GM12878 (cell line): ENCODE measurements at regions of chr1 and their contacts with region 1.

Region 1: GRCh38 chr1:165367375-165367993 is 11.0 kb upstream of the LMX1A start:
- DNase-seq: peak; percentile 3
- ATAC-seq: peak; percentile 91
- H3K4me3 ChIP-seq: no peak overlapping the region
- H3K27ac ChIP-seq: no peak overlapping the region
- H3K4me1 ChIP-seq: no peaks in the 10 kb centered on the region
- H3K27me3 ChIP-seq: no peaks in the 10 kb centered on the region; a peak in 1 of 4 replicates
- CTCF ChIP-seq: peak; percentile 79 to 97 (median 96)
- EP300 ChIP-seq: no peak
- POLR2A ChIP-seq: no peak
- RAD21 ChIP-seq: peak; percentile 53

Region 2: DNA sequence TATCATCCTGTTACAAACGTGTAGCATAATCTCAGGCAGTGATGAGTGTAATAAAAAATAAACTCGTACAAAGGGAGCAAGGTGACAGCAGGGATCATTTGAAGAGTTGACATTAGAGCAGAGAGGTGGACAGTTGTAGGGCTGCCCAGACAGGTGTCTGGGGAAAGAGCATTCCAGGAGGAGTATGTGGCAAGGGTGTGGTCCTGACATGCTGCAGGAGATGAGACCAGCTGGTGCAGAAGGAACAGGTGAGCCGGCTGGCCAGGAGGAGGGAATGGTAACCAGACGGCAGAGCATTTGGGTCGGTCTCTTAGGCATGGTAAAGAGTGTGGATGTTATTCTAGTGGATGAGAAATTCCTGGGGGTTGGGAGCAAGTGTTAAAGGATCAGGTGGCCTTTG is 317.2 kb before region 1 on chr1:
- CTCF ChIA-PET with region 1: no interaction called
- POLR2A ChIA-PET with region 1: no interaction called
- RAD21 ChIA-PET with region 1: no interaction called
- SMC1A ChIA-PET with region 1: no interaction called
- in situ Hi-C with region 1: no loop called
- intact Hi-C with region 1: no loop called
- DNase-seq: no peak
- ATAC-seq: no peak
- H3K4me3 ChIP-seq: no peak overlapping the region
- H3K27ac ChIP-seq: no peak overlapping the region
- H3K4me1 ChIP-seq: no peaks in the 10 kb centered on the region
- H3K27me3 ChIP-seq: no peaks in the 10 kb centered on the region; a peak in 1 of 4 replicates
- CTCF ChIP-seq: no peak
- EP300 ChIP-seq: no peak
- POLR2A ChIP-seq: no peak
- RAD21 ChIP-seq: no peak

Region 3: DNA sequence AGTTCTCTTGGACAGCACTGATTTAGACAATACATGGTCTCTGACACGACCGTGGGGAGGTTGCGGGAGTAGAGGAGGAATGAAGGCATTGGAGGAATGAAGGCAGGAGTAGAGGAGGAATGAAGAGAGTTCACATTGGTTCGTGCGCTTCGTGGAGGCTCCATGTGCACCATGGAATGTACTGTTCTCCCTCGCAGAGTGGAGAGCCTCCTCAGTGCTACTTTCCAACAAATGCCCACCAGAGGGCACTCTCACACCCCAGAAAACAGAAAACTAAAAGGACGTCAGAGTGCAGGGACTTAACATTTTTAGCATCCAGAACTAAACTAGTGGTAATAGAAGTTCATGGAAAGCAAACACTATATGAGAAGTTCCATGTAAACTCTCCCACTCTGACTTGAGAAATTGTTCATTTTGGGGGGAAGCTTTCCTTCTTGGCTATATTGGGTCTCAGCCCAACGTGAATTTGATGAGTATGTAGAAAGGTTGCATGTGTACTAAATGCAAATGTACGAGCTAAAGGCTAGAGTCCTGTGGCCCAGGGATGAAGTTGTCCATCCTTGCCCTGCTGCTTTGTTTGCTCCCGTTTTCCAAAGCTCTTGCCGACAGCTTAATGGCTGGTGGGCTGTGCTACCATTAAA is 222.6 kb before region 1 on chr1:
- CTCF ChIA-PET with region 1: no interaction called
- POLR2A ChIA-PET with region 1: no interaction called
- RAD21 ChIA-PET with region 1: no interaction called
- SMC1A ChIA-PET with region 1: no interaction called
- in situ Hi-C with region 1: no loop called
- intact Hi-C with region 1: loop called (anchors 5 kb)
- DNase-seq: no peak
- ATAC-seq: peak; percentile 94
- H3K4me3 ChIP-seq: no peak overlapping the region
- H3K27ac ChIP-seq: no peak overlapping the region
- H3K4me1 ChIP-seq: no peaks in the 10 kb centered on the region
- H3K27me3 ChIP-seq: no peaks in the 10 kb centered on the region; a peak in 1 of 4 replicates
- CTCF ChIP-seq: peak; percentile 73 to 82 (median 81)
- EP300 ChIP-seq: no peak
- POLR2A ChIP-seq: no peak
- RAD21 ChIP-seq: peak; percentile 49

Region 4: DNA sequence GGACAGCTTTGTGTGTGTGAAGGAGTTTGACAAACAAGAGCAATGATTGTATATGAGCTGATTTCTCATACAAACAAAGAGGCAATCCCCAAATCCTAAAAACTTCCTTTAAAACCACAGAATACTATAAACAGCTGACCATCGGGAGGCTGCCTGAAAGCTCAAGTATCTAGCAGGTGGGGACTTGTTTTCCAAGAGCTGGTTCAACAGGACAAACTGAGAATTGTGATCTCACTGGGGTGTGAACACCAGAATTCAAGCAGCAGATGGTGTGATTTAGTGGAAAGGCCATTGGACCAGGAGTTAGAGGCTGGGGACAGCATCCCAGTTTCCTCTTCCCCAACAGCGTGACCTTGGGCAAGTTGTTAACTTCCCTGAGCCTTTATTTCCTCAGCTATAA is 24.9 kb before region 1 on chr1:
- CTCF ChIA-PET with region 1: interaction called, 13 read pairs
- POLR2A ChIA-PET with region 1: no interaction called
- RAD21 ChIA-PET with region 1: interaction called, 3 read pairs
- SMC1A ChIA-PET with region 1: interaction called, 3 read pairs
- in situ Hi-C with region 1: no loop called
- intact Hi-C with region 1: no loop called
- DNase-seq: no peak
- ATAC-seq: no peak
- H3K4me3 ChIP-seq: no peak overlapping the region
- H3K27ac ChIP-seq: no peak overlapping the region
- H3K4me1 ChIP-seq: no peaks in the 10 kb centered on the region
- H3K27me3 ChIP-seq: peaks cover 0 to 2% of the 10 kb centered on the region in 2 experiments; a peak in 1 of 4 replicates
- CTCF ChIP-seq: no peak
- EP300 ChIP-seq: no peak
- POLR2A ChIP-seq: no peak
- RAD21 ChIP-seq: no peak

Region 5: DNA sequence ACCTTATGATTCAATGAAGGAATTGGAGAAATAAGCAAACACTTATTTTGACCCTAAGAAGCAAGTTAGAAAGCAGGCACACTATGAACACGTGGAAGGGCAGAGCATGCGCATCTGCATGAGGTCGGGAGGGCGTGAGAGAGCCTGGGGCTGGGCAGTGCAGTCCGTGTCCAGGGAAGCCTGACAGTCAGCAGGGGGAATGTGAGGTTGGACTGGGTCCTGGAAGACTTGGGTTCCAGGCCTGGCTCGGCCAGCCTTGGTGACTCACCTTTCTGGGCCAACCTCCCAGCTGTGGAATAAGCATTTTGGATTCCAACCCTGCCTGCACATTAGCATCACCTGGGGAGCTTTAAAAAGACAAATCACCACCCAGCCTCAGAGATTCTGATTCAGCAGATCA is 15.6 kb after region 1 on chr1:
- CTCF ChIA-PET with region 1: interaction called, 38 read pairs
- POLR2A ChIA-PET with region 1: no interaction called
- RAD21 ChIA-PET with region 1: no interaction called
- SMC1A ChIA-PET with region 1: no interaction called
- in situ Hi-C with region 1: no loop called
- intact Hi-C with region 1: no loop called
- DNase-seq: no peak
- ATAC-seq: no peak
- H3K4me3 ChIP-seq: no peak overlapping the region
- H3K27ac ChIP-seq: no peak overlapping the region
- H3K4me1 ChIP-seq: no peaks in the 10 kb centered on the region
- H3K27me3 ChIP-seq: peaks cover 0 to 6% of the 10 kb centered on the region in 2 experiments; a peak in 3 of 4 replicates
- CTCF ChIP-seq: no peak
- EP300 ChIP-seq: no peak
- POLR2A ChIP-seq: no peak
- RAD21 ChIP-seq: no peak

Region 6: DNA sequence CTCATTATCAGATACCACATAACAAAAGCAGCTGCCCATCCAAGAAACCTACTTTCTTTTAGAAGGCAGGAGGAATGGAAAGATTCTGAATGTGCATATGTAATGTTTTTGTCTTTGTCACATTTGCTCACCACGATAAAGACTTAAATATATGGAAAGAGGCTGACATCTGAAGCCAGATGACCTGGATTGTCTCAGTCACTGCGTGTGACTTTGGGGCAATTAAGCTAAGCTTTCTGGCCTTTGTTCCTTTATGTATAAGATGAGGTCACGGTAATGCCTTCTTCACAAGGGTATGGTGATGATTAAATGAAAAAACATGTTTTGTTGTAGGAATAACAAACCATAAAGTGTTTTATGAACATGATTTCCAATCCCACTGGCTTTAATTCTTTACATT is 219.0 kb after region 1 on chr1:
- CTCF ChIA-PET with region 1: interaction called, 42 read pairs
- POLR2A ChIA-PET with region 1: no interaction called
- RAD21 ChIA-PET with region 1: no interaction called
- SMC1A ChIA-PET with region 1: no interaction called
- in situ Hi-C with region 1: no loop called
- intact Hi-C with region 1: no loop called
- DNase-seq: no peak
- ATAC-seq: no peak
- H3K4me3 ChIP-seq: no peak overlapping the region
- H3K27ac ChIP-seq: no peak overlapping the region
- H3K4me1 ChIP-seq: no peaks in the 10 kb centered on the region
- H3K27me3 ChIP-seq: peaks cover 0 to 11% of the 10 kb centered on the region in 2 experiments; a peak in 1 of 4 replicates
- CTCF ChIP-seq: no peak
- EP300 ChIP-seq: no peak
- POLR2A ChIP-seq: no peak
- RAD21 ChIP-seq: no peak